Calu3 (cell line): ENCODE measurements at regions of chr1 and their contacts with region 1.

Region 1: DNA sequence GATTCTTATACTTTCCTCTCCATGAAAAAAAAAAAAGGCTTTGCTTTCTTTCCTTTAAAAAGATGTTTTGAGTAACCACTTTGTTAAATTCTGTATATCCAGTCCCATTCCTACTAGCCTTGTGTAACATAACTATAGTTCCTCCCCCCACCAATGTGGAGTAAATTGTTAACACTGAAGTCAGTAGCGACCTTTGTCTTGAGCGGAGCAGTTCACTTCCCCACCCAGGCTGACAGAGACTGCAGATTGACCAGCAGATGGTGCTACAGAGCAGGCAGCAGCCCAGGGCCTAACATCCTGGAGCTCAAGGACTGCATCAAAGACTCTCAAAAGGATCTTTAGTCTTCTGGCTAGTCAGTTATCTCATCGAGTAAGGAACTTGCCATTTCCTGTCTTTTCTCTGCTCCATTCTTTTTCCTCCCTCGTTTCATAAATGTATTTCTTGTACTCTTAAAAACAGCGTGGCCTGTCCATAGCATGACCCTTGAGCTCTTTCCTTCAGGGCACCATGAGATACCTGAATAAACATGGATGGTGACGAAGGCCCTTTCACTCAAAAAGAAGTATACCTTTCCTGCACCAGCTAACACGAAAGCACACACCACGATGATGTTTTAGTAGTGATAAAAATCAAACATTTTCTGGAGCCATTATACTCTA is 503.5 kb upstream of the PKN2 start:
- DNase-seq: peak; percentile 85
- H3K4me3 Mint-ChIP-seq: no peak overlapping the region
- H3K27ac Mint-ChIP-seq: peak overlapping the region; percentile 12
- H3K4me1 Mint-ChIP-seq: peaks cover 38% of the 10 kb centered on the region
- H3K27me3 Mint-ChIP-seq: no peaks in the 10 kb centered on the region
- CTCF ChIP-seq: peak; percentile 91

Region 2: GRCh38 chr1:87292684-87293493 is 887.7 kb before region 1 on chr1:
- CTCF ChIA-PET with region 1: no interaction called
- intact Hi-C with region 1: loop called (anchors 10 kb)
- DNase-seq: peak; percentile 65
- H3K4me3 Mint-ChIP-seq: no peak overlapping the region
- H3K27ac Mint-ChIP-seq: no peak overlapping the region
- H3K4me1 Mint-ChIP-seq: no peaks in the 10 kb centered on the region
- H3K27me3 Mint-ChIP-seq: no peaks in the 10 kb centered on the region
- CTCF ChIP-seq: peak; percentile 75

Region 3: DNA sequence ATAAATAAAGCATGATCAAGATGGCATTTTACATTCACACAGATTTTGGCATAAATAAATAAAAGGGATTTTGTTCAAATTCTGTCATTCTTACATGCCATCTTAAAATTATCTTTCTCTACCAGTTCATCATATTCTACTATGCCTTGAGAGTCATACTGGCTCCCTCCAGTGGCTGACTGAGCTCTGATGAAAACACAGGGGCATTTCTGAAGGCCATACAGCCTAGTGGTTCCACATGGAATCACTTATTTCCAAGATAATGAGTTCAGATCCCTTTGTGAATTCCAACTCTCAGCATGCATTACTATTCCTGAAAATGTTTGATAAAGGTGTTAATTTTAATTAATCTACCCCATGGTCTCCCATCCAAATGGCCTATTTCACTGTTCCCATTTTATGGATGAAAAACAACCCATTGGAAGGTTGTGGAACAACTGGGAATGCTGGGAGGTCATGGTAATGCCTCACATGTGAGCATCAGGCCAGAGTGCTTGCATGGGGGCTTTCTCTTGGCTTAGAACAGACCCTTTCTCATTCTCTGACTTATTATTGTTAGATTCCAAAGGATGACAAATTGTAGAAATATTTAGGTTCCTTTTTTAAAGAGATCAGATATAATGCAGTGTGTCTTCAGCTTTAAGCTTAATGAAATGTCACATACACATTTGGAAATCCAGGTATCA is 118.9 kb before region 1 on chr1:
- CTCF ChIA-PET with region 1: interaction called, 4 read pairs
- intact Hi-C with region 1: loop called (anchors 5 kb)
- DNase-seq: peak; percentile 69
- H3K4me3 Mint-ChIP-seq: no peak overlapping the region
- H3K27ac Mint-ChIP-seq: no peak overlapping the region
- H3K4me1 Mint-ChIP-seq: peaks cover 35% of the 10 kb centered on the region
- H3K27me3 Mint-ChIP-seq: no peaks in the 10 kb centered on the region
- CTCF ChIP-seq: peak; percentile 71

Region 4: GRCh38 chr1:88224906-88225305 is 44.3 kb after region 1 on chr1:
- CTCF ChIA-PET with region 1: interaction called, 16 read pairs
- intact Hi-C with region 1: loop called (anchors 1 kb)
- DNase-seq: no peak
- H3K4me3 Mint-ChIP-seq: no peak overlapping the region
- H3K27ac Mint-ChIP-seq: no peak overlapping the region
- H3K4me1 Mint-ChIP-seq: peaks cover 8% of the 10 kb centered on the region
- H3K27me3 Mint-ChIP-seq: no peaks in the 10 kb centered on the region
- CTCF ChIP-seq: no peak

Region 5: DNA sequence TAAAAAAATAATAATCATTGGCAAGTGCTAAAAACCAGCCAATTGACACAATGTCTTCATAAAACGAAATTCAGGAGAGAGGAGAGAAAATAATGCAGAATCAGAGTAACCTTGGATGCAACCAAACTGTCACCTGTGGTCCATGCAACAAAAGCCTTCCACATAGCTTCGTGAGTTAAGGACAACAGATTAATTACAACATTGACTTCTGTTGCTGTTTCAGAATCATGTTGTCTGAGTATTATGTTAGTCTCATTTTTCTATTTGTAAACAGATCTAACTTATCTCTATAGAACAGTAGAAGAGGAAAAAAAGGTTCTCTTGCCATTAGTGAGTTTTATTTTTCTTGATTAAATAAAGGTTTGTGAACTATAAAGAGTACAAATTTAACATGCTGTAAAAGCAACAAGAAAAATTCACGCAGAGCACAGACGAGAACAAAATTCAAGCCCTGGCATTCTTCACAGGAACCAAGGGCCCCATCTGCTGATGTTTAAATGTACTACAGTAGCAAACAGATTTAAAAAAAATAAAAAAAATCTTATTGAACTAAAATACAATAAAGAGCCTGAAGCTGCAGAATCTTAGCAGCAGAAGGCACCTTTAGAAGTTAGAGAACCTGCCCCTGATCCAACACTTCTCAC is 122.4 kb after region 1 on chr1:
- CTCF ChIA-PET with region 1: interaction called, 8 read pairs
- intact Hi-C with region 1: loop called (anchors 1 kb)
- DNase-seq: peak; percentile 21
- H3K4me3 Mint-ChIP-seq: no peak overlapping the region
- H3K27ac Mint-ChIP-seq: no peak overlapping the region
- H3K4me1 Mint-ChIP-seq: no peaks in the 10 kb centered on the region
- H3K27me3 Mint-ChIP-seq: no peaks in the 10 kb centered on the region
- CTCF ChIP-seq: peak; percentile 47

Region 6: DNA sequence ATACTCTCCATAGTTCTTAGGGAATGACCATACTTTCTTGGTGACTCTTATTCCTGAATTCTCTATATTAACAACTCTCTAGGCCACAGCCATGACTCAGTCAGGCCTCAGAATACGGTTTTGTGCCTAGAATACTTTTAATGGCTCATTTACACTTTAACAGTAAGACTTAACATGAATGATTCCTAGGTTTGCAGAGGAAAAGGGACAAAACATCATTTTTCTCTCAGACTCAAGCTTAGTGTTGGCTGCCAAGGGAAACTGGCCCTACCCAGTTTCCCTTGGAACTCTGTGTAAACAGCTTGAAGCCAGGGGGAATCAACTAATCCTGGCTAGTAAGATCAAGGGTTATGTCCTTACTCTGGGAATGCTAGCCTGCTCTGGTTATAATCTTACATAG is 338.6 kb after region 1 on chr1:
- CTCF ChIA-PET with region 1: no interaction called
- intact Hi-C with region 1: no loop called
- DNase-seq: no peak
- H3K4me3 Mint-ChIP-seq: no peak overlapping the region
- H3K27ac Mint-ChIP-seq: no peak overlapping the region
- H3K4me1 Mint-ChIP-seq: no peaks in the 10 kb centered on the region
- H3K27me3 Mint-ChIP-seq: no peaks in the 10 kb centered on the region
- CTCF ChIP-seq: no peak